Posterior cingulate gyrus (tissue), 11 donors: ENCODE measurements at regions of chr1 and their contacts with region 1.

Region 1: GRCh38 chr1:198465201-198466144 is 75.0 kb downstream of the ATP6V1G3 start:
- DNase-seq: no peak

Region 2: DNA sequence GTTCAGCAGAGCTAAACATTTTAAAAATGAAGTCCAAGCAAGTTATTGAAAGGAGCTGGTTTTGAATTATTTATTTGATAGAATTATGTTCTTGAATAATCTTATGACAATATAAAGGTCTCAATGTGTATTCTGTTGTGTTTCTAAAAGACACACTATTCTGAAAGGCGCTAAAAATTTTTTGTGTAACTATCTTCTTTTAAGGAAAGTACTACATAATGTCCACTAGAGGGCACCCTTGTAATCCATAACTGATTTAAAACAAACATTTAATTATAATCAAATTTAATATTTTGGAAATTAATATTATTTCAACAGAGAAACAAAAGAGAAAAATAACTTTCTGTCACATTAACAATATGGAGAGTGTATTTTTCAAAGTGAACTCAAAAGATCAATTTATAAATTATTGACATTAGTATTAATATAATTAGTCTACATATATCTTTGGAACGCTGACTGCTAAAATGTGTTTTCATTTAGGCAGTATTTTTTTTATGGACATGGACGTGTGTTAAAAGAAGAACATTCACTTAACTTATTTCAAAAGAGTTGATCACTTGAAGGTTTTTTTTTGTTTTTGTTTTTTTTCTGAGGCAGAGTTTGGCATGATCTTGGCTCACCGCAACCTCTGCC is 938.6 kb before region 1 on chr1:
- intact Hi-C with region 1: loop called (anchors 5 kb)
- DNase-seq: no peak

Region 3: GRCh38 chr1:197614916-197615692 is 850.4 kb before region 1 on chr1:
- intact Hi-C with region 1: loop called (anchors 2 kb)
- DNase-seq: peak in 5 of 10 donors; percentile 7 to 49 (median 14)

Region 4: DNA sequence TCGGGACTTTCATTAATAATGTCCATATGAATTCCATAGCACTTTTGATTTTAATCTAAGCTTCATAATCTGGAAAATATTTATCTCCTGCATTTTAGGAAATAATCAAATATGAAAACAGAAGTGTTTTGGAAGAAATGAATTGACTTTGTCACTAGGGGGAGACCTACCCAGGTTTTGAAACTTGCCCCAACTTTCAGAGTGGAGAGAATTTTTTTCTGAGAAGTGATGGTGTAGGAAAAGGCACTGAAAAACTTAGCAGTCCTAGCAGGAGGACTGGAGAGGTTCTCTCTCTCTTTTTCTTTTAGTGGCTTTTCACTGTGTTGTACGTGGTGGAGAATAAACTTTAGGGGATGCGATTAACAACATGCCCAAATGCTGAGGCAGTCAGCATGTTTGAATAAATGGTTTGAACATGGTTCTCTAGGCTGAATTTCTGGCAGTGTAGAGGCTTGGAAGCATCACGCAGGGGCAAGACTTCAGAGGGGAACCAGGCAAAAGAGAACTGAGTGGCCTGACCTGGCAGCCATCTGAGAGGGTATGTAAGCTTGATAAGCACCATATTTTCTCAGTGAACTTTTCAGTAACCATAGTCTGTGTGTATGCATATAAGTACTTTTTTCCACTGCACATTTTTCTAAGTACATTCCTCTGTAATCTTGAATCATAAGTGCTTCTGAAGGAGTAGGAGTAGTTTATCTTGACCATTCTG is 377.0 kb before region 1 on chr1:
- intact Hi-C with region 1: loop called (anchors 5 kb)
- DNase-seq: no peak

Region 5: DNA sequence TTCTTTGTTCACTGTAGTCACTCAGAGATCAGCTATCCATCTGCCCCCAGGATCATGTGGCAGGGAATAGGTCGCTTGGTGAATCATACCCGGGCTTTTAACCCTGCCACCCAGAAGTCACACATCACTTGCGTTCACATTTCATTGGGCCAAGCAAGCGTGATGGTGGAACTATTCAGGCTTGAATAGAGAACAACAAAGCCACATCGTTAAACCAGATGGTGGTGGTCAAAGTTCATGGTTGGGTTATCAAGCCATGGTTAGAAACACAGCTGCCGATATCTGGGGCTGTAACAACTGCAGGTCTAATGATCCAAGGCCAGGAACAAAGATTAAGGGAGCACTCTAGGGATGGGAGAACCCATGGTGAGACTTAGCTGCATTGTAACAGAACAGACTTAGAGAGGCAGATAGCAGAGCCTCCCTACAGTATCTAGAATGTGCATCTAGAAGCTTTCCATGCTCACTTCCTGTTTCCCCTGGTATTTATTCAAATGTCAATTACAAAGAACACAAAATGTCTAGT is 133.4 kb after region 1 on chr1:
- intact Hi-C with region 1: no loop called
- DNase-seq: no peak